Mucosa of descending colon (tissue), 3 donors: ENCODE measurements at regions of chr13 and their contacts with region 1.

Region 1: DNA sequence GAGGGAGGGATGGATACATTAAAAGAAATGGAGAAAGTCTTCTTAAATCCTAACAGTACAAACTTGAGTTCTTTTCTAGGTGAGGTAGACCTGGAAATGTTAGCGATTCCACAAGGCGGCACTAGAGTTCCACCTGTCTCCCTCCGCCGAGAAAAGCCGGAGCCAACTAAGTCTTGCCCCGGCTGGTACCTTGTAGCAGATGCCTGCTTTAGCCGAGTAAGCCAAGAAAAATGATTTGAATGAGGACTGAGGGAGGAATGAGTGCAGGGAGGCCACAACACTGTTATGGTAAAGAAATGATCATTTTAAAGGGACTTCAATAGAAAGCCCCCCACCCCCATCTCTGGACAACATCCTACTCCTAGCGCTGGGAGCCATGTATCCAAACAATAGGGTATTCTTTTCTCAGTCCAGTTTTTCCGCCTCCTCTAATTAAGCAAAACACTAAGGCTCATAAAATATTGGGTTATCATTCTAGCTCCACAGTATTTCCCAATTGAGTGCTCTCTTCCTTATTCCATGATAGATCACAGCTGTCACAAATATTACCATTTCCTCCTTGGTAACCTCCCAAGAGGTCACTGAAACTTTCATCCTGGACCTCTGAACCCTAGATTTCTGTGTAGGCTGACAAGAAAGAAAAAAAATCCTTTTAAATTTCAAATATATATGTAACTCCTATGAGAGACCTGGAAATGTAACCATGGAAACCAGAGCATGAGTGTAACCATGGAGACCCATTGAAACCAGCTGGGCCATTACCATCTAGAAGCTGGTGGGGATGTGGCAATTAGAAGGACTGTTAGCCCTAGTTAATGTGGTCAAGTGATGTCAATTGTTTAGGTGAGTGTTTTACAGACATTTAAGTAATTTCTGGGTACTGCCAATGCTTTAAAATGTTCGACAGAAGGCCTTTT is 58.3 kb downstream of the GPALPP1 start:
- DNase-seq: peak; percentile 55 to 89 (median 81)
- ATAC-seq: peak; percentile 93
- H3K4me3 ChIP-seq: no peak overlapping the region
- H3K4me1 ChIP-seq: no peaks in the 10 kb centered on the region
- CTCF ChIP-seq: peak; percentile 62

Region 2: DNA sequence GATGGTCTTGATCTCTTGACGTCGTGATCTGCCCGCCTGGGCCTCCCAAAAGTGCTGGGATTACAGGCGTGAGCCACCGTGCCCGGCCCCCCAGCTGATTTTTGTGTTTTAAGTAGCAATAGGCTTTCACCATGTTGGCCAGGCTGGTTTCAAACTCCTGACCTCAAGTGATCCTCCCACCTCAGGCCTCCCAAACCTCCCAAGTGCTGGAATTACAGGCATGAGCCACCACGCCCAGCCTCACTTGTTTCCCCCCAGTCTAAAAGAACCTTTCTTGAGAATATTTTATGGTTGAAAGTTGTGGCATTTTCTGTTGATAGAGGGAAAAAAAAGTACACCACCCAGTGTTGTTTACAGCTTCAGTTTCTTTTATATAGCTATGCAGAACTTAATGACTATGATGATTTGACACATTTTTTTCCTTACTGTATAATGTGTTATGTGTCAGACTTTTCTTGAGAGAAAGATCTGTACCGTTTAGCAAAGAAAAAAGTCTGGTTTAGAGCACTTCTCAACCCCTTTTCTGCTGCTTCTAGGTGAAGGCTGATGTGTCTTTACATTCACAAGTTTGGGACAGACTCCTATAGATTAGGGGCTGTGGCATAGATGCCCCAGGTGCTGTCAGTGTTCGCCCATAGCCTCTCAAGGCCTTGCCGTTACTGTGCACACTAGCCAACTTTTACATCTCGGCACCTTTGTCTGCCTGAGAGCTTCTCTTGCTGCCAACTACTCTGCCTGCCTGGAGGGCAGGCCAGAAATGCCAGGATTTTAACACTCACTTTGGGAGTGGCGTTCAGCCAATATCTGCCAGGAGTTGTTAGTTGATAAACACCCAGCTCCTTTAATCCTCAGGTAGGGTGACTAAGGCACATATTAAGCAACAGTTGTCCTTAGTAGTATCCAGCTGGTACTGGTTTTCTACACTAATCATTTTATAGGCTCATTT is 120.2 kb after region 1 on chr13:
- intact Hi-C with region 1: no loop called
- DNase-seq: peak in 1 of 3 donors; percentile 65
- ATAC-seq: peak; percentile 99
- H3K4me3 ChIP-seq: no peak overlapping the region
- H3K4me1 ChIP-seq: peaks cover 9% of the 10 kb centered on the region
- CTCF ChIP-seq: no peak

Region 3: DNA sequence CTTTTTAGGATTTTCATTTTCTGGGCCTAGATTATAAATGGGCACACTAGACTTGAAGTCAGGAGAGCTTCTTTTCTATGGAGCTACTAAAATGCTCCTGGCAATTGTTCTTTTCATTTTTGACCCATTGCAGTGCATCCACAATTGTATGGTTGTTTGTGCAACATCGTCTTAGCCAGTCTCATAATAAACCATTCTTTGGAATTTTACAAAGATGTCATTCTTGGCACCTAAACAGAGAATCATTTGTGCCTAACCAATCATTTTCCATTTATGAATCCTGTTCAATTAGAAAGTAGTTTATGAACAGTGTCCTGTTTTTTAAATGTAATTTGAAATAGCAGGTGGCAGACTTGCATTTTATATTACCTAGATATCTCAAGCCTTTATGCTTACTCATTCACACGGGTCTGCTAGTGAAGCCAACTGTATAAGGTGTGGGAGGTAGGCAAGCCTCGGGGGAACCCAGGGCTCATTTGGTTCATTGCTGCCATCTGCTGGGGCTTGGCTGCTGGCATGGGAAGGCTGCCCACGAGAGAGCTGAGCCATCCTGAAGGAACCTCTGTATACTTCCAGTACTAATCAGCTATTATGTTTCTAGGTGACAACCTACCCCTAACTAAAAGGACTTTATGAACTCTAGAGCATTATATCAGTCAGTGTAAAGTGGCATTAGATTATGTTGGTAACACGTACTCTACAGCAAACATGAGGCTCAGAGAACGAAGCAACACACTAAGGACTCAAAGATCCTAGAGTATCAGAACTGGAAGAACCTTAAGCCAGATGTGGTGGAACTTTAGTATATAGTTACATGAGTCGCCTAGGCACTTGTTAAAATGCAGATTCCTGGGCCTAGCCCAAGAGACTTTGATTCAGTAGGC is 233.3 kb after region 1 on chr13:
- intact Hi-C with region 1: loop called (anchors 2 to 5 kb)
- DNase-seq: peak; percentile 60 to 90 (median 86)
- ATAC-seq: peak; percentile 100
- H3K4me3 ChIP-seq: no peak overlapping the region
- H3K4me1 ChIP-seq: no peaks in the 10 kb centered on the region
- CTCF ChIP-seq: peak; percentile 49

Region 4: DNA sequence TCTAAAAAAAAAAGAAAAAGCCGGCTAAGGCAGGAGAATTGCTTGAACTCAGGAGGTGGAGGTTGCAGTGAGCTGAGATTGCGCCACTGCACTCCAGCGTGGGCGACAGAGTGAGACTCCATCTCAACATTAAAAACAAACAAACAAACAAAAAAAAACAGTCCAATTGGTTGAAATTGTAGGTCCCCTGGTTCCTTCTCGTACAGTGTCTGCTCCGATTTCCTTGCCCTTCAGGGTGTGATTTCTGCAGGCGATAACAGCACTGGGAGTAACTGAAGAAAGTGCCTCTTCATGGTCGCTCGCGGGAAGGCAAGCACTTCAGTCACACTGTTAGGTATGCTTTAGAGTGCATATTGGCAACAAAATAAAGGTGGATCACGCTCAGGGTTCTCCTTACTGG is 253.6 kb after region 1 on chr13:
- intact Hi-C with region 1: loop called in 1 of 2 experiments (anchors 10 kb)
- DNase-seq: no peak
- ATAC-seq: no peak
- H3K4me3 ChIP-seq: no peak overlapping the region
- H3K4me1 ChIP-seq: no peaks in the 10 kb centered on the region
- CTCF ChIP-seq: no peak

Region 5: GRCh38 chr13:45310341-45311125 is 262.9 kb after region 1 on chr13:
- intact Hi-C with region 1: loop called (anchors 2 to 10 kb)
- DNase-seq: no peak
- ATAC-seq: no peak
- H3K4me3 ChIP-seq: no peak overlapping the region
- H3K4me1 ChIP-seq: peaks cover 10% of the 10 kb centered on the region
- CTCF ChIP-seq: no peak